ENCODE measurements at regions of chr7 and their contacts with region 1.

Region 1: GRCh38 chr7:128763541-128763940 is 12.1 kb downstream of the OPN1SW start:
- DNase-seq: no peak
- H3K4me3 ChIP-seq: no peak overlapping the region
- H3K27ac ChIP-seq: peak overlapping the region; percentile 77 to 93 (median 83)
- H3K4me1 ChIP-seq: peaks cover 10 to 37% (median 27%) of the 10 kb centered on the region in 4 donors
- H3K27me3 ChIP-seq: no peaks in the 10 kb centered on the region
- CTCF ChIP-seq: no peak
- EP300 ChIP-seq: no peak
- POLR2A ChIP-seq: no peak

Region 2: GRCh38 chr7:128830231-128831177 is 67.0 kb after region 1 on chr7 and contains the start of gene FLNC:
- intact Hi-C with region 1: loop called (anchors 5 kb)
- DNase-seq: no peak
- H3K4me3 ChIP-seq: peak within 1 kb of the TSS; percentile 79 to 86 (median 82)
- H3K27ac ChIP-seq: peak within 1 kb of the TSS; percentile 97 to 99 (median 98)
- H3K4me1 ChIP-seq: peaks cover 63 to 86% (median 83%) of the 10 kb centered on the region in 4 donors
- H3K27me3 ChIP-seq: peaks cover 0 to 4% (median 0%) of the 10 kb centered on the region in 4 donors
- CTCF ChIP-seq: no peak
- EP300 ChIP-seq: no peak
- POLR2A ChIP-seq: peak; percentile 89
- total RNA-seq, gene FLNC: 391 to 932 (median 533) TPM

Region 3: GRCh38 chr7:128849804-128850490 is 86.4 kb after region 1 on chr7:
- intact Hi-C with region 1: no loop called
- DNase-seq: no peak
- H3K4me3 ChIP-seq: no peak overlapping the region
- H3K27ac ChIP-seq: peak overlapping the region in 2 of 4 donors; percentile 32 to 34
- H3K4me1 ChIP-seq: no peaks in the 10 kb centered on the region
- H3K27me3 ChIP-seq: no peaks in the 10 kb centered on the region
- CTCF ChIP-seq: no peak
- EP300 ChIP-seq: no peak
- POLR2A ChIP-seq: no peak

Region 4: DNA sequence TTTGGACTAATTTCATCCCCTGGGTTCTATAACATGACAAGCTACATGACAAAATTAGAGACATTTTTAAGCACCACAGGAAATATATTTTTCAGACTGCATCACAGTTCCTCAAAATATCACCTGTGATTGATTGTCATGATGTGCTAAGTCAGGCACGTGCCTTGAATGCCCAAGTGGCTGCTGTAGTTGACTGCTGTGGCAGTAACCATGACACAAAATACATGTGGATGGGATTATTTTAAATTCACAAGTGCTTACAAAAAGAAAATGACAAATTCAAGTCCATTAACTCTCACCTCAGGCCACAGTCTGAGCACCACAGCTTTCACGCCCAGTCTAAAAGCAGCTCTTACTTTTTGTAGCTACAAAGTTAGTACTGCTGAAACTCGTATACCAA is 245.9 kb after region 1 on chr7:
- intact Hi-C with region 1: no loop called
- DNase-seq: no peak
- H3K4me3 ChIP-seq: no peak overlapping the region
- H3K27ac ChIP-seq: no peak overlapping the region
- H3K4me1 ChIP-seq: peaks cover 0 to 7% (median 5%) of the 10 kb centered on the region in 4 donors
- H3K27me3 ChIP-seq: no peaks in the 10 kb centered on the region
- CTCF ChIP-seq: no peak
- EP300 ChIP-seq: no peak
- POLR2A ChIP-seq: no peak